ENCODE measurements at regions of chr5 and their contacts with region 1.

Region 1: DNA sequence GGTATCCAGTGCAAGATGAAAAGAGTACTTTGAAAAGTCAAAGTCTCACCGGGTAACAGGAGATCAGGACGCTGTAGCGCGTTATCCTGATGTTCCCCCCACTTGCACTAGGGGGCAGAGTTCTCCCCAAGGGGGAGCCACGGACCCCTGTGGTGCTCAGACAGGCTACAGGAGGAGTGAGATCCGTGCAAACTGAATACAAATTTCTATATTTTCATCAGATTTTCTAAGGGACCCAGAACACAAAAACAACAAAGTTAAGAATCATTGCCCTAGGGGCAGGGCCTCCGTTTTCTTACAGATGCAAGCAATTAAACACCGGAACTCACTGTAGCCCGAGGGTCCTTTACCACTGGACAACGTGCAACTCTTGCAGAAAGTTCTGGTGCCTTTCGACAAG is 2.0 kb downstream of the MYO10 start:
- DNase-seq: peak; percentile 24 to 60
- ATAC-seq: no peak
- H3K4me3 ChIP-seq: peak overlapping the region; percentile 88
- H3K27ac ChIP-seq: no peak overlapping the region
- H3K4me1 ChIP-seq: peaks cover 15% of the 10 kb centered on the region
- H3K27me3 ChIP-seq: peaks cover 0 to 24% (median 0%) of the 10 kb centered on the region in 3 donors
- CTCF ChIP-seq: peak; percentile 68

Region 2: DNA sequence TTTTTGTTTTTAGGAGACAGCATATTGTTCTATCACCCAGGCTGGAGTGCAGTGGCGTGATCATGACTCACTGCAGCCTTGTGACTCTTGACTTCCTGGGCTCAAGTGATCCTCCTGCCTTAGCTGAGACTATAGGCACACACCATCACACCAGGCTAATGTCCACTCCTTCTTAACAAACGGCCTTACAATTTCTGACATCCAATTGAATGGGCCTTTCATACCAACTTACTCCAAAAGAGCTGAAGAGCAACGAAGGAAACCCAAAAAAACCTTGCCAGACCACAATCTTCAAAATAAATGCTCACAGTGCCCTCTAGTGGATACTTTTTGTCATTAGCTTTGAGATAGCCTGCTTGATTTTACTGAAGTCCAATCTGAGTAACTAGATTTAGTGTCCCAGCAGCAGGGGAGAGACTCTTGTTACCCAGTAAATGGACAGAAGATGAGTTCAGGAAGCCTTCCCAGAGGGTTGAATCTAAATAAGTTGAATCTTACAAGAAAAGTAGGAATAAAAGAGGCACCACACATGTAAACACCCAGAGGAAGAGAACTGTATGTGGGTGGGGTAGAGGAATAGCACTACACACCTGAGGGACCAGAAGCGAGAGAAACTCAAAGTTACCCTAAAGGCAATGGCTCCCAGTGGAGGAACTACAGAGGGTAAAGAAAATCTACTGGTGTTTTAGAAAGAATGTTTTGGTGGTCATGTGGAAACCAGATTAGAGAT is 477.9 kb before region 1 on chr5:
- intact Hi-C with region 1: no loop called
- DNase-seq: peak; percentile 26 to 57
- ATAC-seq: peak; percentile 78 to 84 (median 82)
- H3K4me3 ChIP-seq: no peak overlapping the region
- H3K27ac ChIP-seq: peak overlapping the region; percentile 47
- H3K4me1 ChIP-seq: peaks cover 60% of the 10 kb centered on the region
- H3K27me3 ChIP-seq: no peaks in the 10 kb centered on the region
- CTCF ChIP-seq: peak; percentile 78

Region 3: DNA sequence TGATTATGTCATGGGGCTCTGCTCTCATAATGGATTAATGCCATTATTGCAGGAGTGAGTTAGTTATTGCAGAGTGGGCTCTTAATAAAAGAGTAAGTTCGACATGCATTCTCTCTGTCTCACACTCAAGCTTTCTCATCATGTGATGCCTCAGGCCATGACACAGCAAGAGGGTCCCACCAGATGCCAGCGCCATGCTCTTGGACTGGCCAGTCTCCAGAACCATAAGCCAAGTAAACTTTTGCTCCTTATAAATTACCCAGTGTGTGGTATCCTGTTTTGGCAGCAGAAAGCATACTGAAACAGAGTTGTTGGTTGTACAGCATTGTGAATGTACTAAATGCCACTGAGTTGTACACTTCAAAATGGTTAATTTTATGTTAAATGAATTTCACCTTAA is 136.2 kb before region 1 on chr5:
- intact Hi-C with region 1: loop called (anchors 5 kb)
- DNase-seq: no peak
- ATAC-seq: no peak
- H3K4me3 ChIP-seq: no peak overlapping the region
- H3K27ac ChIP-seq: no peak overlapping the region
- H3K4me1 ChIP-seq: no peaks in the 10 kb centered on the region
- H3K27me3 ChIP-seq: no peaks in the 10 kb centered on the region
- CTCF ChIP-seq: no peak

Region 4: GRCh38 chr5:16803830-16804229 is 130.3 kb before region 1 on chr5:
- intact Hi-C with region 1: loop called (anchors 5 kb)
- DNase-seq: no peak
- ATAC-seq: no peak
- H3K4me3 ChIP-seq: no peak overlapping the region
- H3K27ac ChIP-seq: no peak overlapping the region
- H3K4me1 ChIP-seq: no peaks in the 10 kb centered on the region
- H3K27me3 ChIP-seq: no peaks in the 10 kb centered on the region
- CTCF ChIP-seq: no peak

Region 5: GRCh38 chr5:17000291-17000939 is 66.3 kb after region 1 on chr5:
- intact Hi-C with region 1: loop called in 1 of 2 experiments (anchors 5 kb)
- DNase-seq: no peak
- ATAC-seq: peak in 1 of 4 donors; percentile 32
- H3K4me3 ChIP-seq: no peak overlapping the region
- H3K27ac ChIP-seq: peak overlapping the region; percentile 1
- H3K4me1 ChIP-seq: peaks cover 14% of the 10 kb centered on the region
- H3K27me3 ChIP-seq: no peaks in the 10 kb centered on the region
- CTCF ChIP-seq: no peak

Region 6: GRCh38 chr5:17132444-17133083 is 198.4 kb after region 1 on chr5:
- intact Hi-C with region 1: loop called in 1 of 2 experiments (anchors 5 kb)
- DNase-seq: no peak
- ATAC-seq: no peak
- H3K4me3 ChIP-seq: no peak overlapping the region
- H3K27ac ChIP-seq: no peak overlapping the region
- H3K4me1 ChIP-seq: no peaks in the 10 kb centered on the region
- H3K27me3 ChIP-seq: peaks cover 0 to 2% (median 0%) of the 10 kb centered on the region in 3 donors
- CTCF ChIP-seq: peak; percentile 80

Region 7: DNA sequence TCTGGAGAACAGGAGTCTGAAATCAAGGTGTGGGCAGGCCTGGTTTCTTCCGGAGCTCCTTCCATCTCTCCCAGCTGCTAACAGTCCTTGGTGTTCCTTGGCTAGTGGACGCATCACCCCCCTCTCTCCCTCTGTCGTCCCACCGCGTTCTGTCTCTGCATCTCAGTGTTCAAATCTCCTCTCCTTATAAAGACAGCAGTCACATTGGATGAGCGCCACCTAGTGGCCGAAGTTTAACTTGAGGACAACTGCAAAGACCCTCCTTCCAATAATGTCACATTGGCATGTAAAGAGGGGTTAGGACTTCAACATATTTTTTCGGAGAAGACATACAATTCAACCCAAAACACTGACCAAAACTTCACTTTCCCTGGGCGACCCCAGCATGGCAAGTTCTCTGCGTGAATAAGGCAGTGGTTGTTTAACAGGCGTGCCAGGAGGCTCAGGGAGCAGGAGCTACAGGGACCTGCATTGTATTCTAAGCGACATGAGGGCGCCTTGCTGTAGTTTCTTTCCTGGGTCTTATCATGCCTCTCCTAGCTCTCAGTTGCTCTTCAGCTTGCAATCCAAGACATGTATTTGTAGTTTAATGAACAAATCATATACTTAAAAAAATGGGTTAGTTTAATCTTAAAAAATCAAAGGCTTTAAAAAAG is 255.4 kb after region 1 on chr5:
- intact Hi-C with region 1: loop called (anchors 5 to 10 kb)
- DNase-seq: peak; percentile 63 to 76
- ATAC-seq: peak; percentile 53 to 74 (median 66)
- H3K4me3 ChIP-seq: no peak overlapping the region
- H3K27ac ChIP-seq: no peak overlapping the region
- H3K4me1 ChIP-seq: peaks cover 21% of the 10 kb centered on the region
- H3K27me3 ChIP-seq: no peaks in the 10 kb centered on the region
- CTCF ChIP-seq: peak; percentile 83

Measured in psoas muscle (tissue), 8 donors.